IMR-90 (cell line): ENCODE measurements at regions of chr5 and their contacts with region 1.

Region 1: DNA sequence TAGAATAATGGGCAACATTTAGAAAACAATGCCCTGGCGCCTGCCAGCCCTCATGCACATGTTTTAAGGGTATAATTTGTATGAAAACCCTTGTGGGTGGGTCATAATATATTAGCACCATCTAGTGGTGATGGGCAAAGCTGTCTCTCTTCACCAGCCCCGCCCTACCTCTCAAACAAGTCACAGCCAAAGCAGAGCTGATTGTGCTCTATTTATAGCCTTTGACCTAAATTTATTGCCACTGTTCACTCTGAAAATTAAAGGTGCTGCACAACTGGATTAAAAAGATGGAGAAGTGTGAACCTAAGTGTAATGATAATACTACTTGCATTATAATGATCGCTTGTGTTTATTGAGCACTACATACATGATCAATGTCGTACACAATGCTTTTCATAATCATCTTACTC is 131.9 kb upstream of the ANKH start:
- DNase-seq: peak; percentile 75
- ATAC-seq: peak; percentile 88
- H3K4me3 ChIP-seq: no peak overlapping the region
- H3K27ac ChIP-seq: no peak overlapping the region
- H3K4me1 ChIP-seq: peaks cover 3% of the 10 kb centered on the region; the same call in 1 of the 2 replicates
- H3K27me3 ChIP-seq: peaks cover 9% of the 10 kb centered on the region; the same call in 1 of the 2 replicates
- CTCF ChIP-seq: peak; percentile 91
- POLR2A ChIP-seq: no peak
- RAD21 ChIP-seq: peak; percentile 92

Region 2: GRCh38 chr5:14405267-14405666 is 598.2 kb before region 1 on chr5:
- CTCF ChIA-PET with region 1: no interaction called
- POLR2A ChIA-PET with region 1: no interaction called
- dilution Hi-C with region 1: no loop called
- in situ Hi-C with region 1: loop called (anchors 25 kb)
- intact Hi-C with region 1: no loop called
- DNase-seq: no peak
- ATAC-seq: no peak
- H3K4me3 ChIP-seq: no peak overlapping the region
- H3K27ac ChIP-seq: peak overlapping the region; percentile 10; the same call in 1 of the 2 replicates
- H3K4me1 ChIP-seq: peaks cover 25% of the 10 kb centered on the region
- H3K27me3 ChIP-seq: no peaks in the 10 kb centered on the region
- CTCF ChIP-seq: peak; percentile 12; the same call in 1 of the 2 replicates
- POLR2A ChIP-seq: no peak
- RAD21 ChIP-seq: no peak

Region 3: GRCh38 chr5:14685757-14686156 is 317.8 kb before region 1 on chr5:
- CTCF ChIA-PET with region 1: interaction called, 14 read pairs
- POLR2A ChIA-PET with region 1: no interaction called
- dilution Hi-C with region 1: no loop called
- in situ Hi-C with region 1: no loop called
- intact Hi-C with region 1: loop called (anchors 1 kb)
- DNase-seq: peak; percentile 69
- ATAC-seq: peak; percentile 89
- H3K4me3 ChIP-seq: no peak overlapping the region
- H3K27ac ChIP-seq: no peak overlapping the region
- H3K4me1 ChIP-seq: peaks cover 3% of the 10 kb centered on the region
- H3K27me3 ChIP-seq: no peaks in the 10 kb centered on the region
- CTCF ChIP-seq: peak; percentile 76
- POLR2A ChIP-seq: no peak
- RAD21 ChIP-seq: peak; percentile 86

Region 4: GRCh38 chr5:14720236-14720971 is 283.1 kb before region 1 on chr5:
- CTCF ChIA-PET with region 1: interaction called, 30 read pairs
- POLR2A ChIA-PET with region 1: no interaction called
- dilution Hi-C with region 1: no loop called
- in situ Hi-C with region 1: loop called (anchors 5 kb)
- intact Hi-C with region 1: no loop called
- DNase-seq: peak; percentile 76
- ATAC-seq: peak; percentile 76
- H3K4me3 ChIP-seq: no peak overlapping the region
- H3K27ac ChIP-seq: peak overlapping the region; percentile 85; the same call in 1 of the 2 replicates
- H3K4me1 ChIP-seq: peaks cover 11% of the 10 kb centered on the region
- H3K27me3 ChIP-seq: no peaks in the 10 kb centered on the region
- CTCF ChIP-seq: no peak
- POLR2A ChIP-seq: no peak
- RAD21 ChIP-seq: no peak

Region 5: DNA sequence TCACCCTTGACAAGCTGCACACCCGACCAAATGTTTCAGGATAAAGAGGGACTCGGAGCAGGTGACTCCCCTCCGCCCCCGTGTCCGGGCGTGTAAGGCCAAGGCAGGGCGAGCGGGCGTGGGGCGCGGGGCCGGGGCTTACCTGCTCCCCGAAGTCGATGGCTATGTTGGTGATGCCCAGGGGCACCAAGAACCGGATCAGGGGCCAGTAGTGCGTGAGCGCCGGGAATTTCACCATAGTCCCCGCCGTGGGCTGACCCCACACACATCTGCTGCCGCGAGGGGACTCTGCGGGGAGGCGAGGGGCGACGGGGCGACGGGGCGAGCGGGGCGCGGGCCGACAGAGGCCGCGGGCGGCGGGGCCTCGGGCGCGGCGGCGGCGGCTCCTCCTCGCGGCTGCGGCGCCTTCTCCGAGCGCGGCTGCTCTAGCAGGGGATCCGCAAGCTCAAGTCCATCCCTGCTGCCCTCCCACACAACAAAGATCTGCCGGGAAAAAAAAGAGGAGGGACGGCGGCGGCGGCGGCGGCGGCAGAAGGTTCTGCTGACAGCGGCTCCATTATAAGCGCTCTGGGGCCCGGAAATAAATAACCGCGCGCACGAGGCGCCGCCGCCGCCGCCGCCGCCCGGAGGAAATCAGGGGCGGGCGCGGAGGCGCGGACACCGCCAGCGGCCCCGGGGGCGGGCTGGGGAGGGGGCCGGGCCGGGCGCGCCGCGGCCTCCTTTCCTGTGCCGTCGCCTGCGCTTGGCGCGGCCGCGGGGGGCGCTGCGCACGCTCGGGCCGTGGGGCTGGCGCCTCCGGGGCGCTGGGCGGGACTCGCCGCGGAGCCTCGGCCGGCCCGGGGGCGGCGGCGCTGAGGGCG is 132.1 kb before region 1 on chr5 and contains the start of gene ANKH:
- CTCF ChIA-PET with region 1: interaction called, 3 read pairs
- POLR2A ChIA-PET with region 1: no interaction called
- dilution Hi-C with region 1: no loop called
- in situ Hi-C with region 1: loop called (anchors 10 kb)
- intact Hi-C with region 1: loop called (anchors 1 kb)
- DNase-seq: peak; percentile 69
- ATAC-seq: peak; percentile 97
- H3K4me3 ChIP-seq: peak within 1 kb of the TSS; percentile 65
- H3K27ac ChIP-seq: peak within 1 kb of the TSS; percentile 89
- H3K4me1 ChIP-seq: peaks cover 2% of the 10 kb centered on the region
- H3K27me3 ChIP-seq: no peaks in the 10 kb centered on the region
- CTCF ChIP-seq: peak; percentile 58
- POLR2A ChIP-seq: peak; percentile 20
- RAD21 ChIP-seq: peak; percentile 38
- total RNA-seq, gene ANKH: 5.2 and 5.6 TPM in 2 replicates

Region 6: GRCh38 chr5:14958196-14958595 is 45.3 kb before region 1 on chr5:
- CTCF ChIA-PET with region 1: interaction called, 10 read pairs
- POLR2A ChIA-PET with region 1: no interaction called
- dilution Hi-C with region 1: no loop called
- in situ Hi-C with region 1: no loop called
- intact Hi-C with region 1: no loop called
- DNase-seq: peak; percentile 14
- ATAC-seq: no peak
- H3K4me3 ChIP-seq: no peak overlapping the region
- H3K27ac ChIP-seq: no peak overlapping the region
- H3K4me1 ChIP-seq: no peaks in the 10 kb centered on the region
- H3K27me3 ChIP-seq: peaks cover 14% of the 10 kb centered on the region
- CTCF ChIP-seq: no peak
- POLR2A ChIP-seq: no peak
- RAD21 ChIP-seq: no peak